Vagina (tissue), 2 donors: ENCODE measurements at regions of chr10 and their contacts with region 1.

Region 1: GRCh38 chr10:99612167-99612831 is 7.9 kb downstream of the SLC25A28 start:
- DNase-seq: no peak
- H3K4me3 ChIP-seq: no peak overlapping the region
- H3K27ac ChIP-seq: no peak overlapping the region
- H3K4me1 ChIP-seq: peaks cover 31% of the 10 kb centered on the region
- H3K27me3 ChIP-seq: no peaks in the 10 kb centered on the region
- CTCF ChIP-seq: peak; percentile 74 to 78 (median 74)
- POLR2A ChIP-seq: no peak

Region 2: DNA sequence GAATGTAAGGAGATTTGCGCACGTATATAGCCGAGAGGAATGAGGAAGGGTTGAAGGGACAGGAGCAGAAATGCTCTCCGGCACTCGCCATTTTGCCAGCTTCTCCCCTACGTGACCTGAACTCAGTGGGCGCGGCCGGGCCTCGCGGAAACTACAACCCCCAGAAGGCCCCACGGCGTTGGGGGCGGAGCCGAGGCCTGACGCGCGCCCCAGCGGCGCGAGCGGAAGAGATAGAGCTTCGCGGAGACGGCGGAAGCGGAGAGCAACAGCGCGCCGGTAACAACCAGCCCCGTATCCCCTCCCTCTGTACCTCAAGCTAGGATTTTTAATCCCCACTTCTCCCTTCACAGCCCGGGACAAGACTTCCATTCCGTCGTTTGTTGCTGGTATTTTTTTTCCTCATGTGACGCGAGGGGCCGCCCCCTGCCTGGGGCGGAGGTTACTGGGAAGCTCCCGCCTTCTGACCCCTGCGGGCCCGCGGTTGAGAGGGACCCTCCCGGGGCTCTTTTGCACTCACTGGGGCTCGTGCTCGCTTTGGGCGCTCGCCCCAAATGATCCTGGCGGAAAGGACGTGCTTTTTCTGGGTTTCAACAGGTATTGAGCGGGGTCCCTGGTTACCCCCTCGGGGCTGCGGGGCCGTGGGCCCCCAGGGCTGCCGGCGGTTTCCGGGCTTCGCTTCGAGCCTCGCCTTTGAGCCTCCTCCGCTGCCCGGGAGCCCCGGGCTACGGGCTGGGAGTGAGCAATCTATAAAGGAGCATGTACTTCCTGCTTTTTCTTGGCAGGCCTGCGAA is 1477.7 kb before region 1 on chr10 and contains the start of gene R3HCC1L:
- intact Hi-C with region 1: no loop called
- DNase-seq: no peak
- H3K4me3 ChIP-seq: peak within 1 kb of the TSS; percentile 73 to 75
- H3K27ac ChIP-seq: peak within 1 kb of the TSS; percentile 93
- H3K4me1 ChIP-seq: peaks cover 17% of the 10 kb centered on the region
- H3K27me3 ChIP-seq: no peaks in the 10 kb centered on the region
- CTCF ChIP-seq: no peak
- POLR2A ChIP-seq: peak in 1 of 2 donors; percentile 67
- total RNA-seq, gene R3HCC1L: 12.3 TPM

Region 3: DNA sequence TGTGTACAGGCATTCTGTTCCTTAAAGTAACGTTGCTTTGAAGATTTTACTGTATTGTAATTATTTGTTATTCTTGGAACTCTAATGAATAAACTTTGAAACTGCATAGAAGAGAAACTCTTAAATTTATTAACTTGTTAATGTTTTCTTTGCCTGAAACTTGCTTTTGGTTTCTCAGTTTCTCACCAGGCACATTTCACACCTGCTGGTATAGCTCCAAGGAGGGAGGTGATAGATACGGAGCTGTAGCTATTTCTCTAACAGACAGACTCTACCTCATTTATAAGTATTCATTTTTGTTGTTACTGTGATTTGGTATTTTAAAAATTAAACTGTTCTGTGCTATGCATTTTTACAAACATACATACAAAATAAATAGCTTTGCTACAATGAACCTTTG is 1445.1 kb before region 1 on chr10:
- intact Hi-C with region 1: no loop called
- DNase-seq: no peak
- H3K4me3 ChIP-seq: no peak overlapping the region
- H3K27ac ChIP-seq: no peak overlapping the region
- H3K4me1 ChIP-seq: peaks cover 18% of the 10 kb centered on the region
- H3K27me3 ChIP-seq: no peaks in the 10 kb centered on the region
- CTCF ChIP-seq: no peak
- POLR2A ChIP-seq: no peak

Region 4: DNA sequence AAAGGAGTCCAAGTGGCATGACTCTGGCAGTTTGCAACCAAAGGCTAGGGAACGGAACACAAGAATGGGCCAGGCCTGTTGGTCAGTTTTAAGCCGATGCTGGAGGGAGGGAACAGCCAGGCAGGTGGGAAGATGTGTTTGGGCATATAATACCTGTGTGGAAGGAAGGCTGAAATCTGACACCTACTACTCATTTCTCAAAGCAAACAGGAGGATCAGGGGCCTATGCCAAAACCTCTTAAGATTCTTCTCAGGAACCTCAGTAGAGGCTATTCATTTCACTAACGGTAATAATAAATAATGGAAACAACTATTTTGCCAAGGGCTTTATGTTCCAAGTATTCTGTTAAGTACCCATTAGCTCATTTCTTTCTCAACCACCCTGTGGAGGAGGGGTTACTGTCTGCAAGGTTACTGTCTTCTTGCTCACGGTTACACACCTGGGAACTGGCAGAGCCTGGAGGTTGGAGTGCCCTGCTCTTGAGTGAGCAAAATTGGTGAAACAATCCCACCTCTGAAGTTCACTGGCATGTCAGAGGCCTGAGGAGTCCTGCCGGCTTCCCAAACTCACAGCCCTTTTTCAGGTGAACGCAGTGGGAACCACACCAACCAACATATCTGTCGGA is 217.4 kb before region 1 on chr10:
- intact Hi-C with region 1: loop called (anchors 5 kb)
- DNase-seq: no peak
- H3K4me3 ChIP-seq: no peak overlapping the region
- H3K27ac ChIP-seq: no peak overlapping the region
- H3K4me1 ChIP-seq: no peaks in the 10 kb centered on the region
- H3K27me3 ChIP-seq: no peaks in the 10 kb centered on the region
- CTCF ChIP-seq: no peak
- POLR2A ChIP-seq: no peak

Region 5: DNA sequence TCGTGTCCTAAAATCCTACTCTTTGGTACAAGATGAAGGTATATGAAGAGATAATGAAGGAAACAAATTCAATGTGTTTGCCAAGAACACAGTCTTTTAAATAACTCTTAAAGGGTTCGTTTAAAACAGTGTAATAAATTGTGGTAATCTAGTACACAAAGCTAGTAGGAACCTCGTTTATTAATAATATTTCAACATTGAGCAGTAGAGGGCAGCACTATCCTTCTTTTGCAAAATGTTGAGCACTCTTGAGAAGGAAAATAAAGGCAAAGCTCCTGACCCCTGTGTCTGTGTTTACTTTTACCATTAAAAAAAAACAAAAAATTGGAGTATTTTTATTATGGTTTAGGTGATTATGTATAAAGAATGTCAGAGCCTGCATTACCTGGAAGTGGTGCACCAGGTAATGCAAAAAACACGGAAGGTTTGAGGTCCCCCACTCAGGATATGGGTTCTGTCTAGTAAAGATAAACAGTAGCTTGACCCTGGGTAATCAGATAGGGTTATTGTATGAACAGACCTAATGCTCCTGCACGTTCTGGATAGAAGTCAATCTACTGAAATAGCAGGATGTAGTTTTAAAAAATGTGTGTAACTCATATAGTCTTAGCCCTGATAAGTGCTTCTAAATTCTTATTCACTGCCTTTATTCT is 176.2 kb before region 1 on chr10:
- intact Hi-C with region 1: loop called (anchors 5 kb)
- DNase-seq: no peak
- H3K4me3 ChIP-seq: no peak overlapping the region
- H3K27ac ChIP-seq: no peak overlapping the region
- H3K4me1 ChIP-seq: peaks cover 23% of the 10 kb centered on the region
- H3K27me3 ChIP-seq: no peaks in the 10 kb centered on the region
- CTCF ChIP-seq: peak; percentile 18 to 51 (median 24)
- POLR2A ChIP-seq: no peak